ENCODE measurements at regions of chr14 and their contacts with region 1.

Region 1: GRCh38 chr14:101964297-101965144 is at the start of gene DYNC1H1:
- H3K4me3 Mint-ChIP-seq: peak within 1 kb of the TSS; percentile 93
- H3K27ac Mint-ChIP-seq: peak within 1 kb of the TSS; percentile 94
- H3K4me1 Mint-ChIP-seq: peaks cover 46% of the 10 kb centered on the region
- H3K27me3 Mint-ChIP-seq: peaks cover 4% of the 10 kb centered on the region

Region 2: DNA sequence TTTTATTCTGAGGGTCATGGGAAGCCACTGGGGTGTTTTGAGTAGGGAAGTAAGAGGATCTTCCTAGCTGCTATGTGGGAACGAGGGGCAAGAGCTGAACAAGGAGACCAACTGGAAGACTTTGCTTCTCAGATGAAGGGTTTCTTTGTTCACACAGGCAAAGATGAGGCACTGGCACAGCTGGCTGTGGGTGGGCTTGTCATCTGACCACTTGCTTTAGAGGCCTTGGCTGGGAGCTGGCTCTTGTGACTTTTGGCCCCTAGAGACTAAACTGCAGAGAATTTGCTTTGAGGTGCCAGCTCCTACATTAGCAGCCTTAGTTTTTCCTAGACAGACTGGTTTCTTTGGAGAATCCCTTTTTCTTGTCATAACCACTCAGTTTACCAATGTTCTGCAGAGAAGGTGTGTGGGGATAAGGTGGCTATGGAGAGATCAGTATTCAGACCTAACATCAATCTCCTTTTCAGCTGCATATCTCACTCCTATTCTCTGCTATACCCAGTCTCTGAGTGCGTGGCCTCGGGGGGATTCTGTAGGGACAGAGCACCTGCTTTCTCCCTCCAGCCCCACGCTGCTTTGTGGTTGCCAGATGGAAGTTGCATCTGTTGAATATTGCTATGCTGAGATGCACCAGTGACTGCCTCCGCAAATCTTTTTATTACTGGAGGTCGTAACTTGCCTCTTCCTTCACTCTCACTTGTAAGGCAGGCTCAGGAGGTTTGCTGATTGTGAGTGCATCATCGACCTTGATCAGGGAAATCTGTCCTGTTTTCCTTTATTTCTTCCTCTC is 190.3 kb before region 1 on chr14:
- intact Hi-C with region 1: loop called (anchors 10 kb)
- H3K4me3 Mint-ChIP-seq: no peak overlapping the region
- H3K27ac Mint-ChIP-seq: no peak overlapping the region
- H3K4me1 Mint-ChIP-seq: peaks cover 11% of the 10 kb centered on the region
- H3K27me3 Mint-ChIP-seq: peaks cover 20% of the 10 kb centered on the region

Region 3: GRCh38 chr14:101947906-101948665 is 16.4 kb before region 1 on chr14:
- intact Hi-C with region 1: loop called (anchors 2 kb)
- H3K4me3 Mint-ChIP-seq: peak overlapping the region; percentile 94
- H3K27ac Mint-ChIP-seq: peak overlapping the region; percentile 100
- H3K4me1 Mint-ChIP-seq: peaks cover 26% of the 10 kb centered on the region
- H3K27me3 Mint-ChIP-seq: peaks cover 39% of the 10 kb centered on the region

Region 4: DNA sequence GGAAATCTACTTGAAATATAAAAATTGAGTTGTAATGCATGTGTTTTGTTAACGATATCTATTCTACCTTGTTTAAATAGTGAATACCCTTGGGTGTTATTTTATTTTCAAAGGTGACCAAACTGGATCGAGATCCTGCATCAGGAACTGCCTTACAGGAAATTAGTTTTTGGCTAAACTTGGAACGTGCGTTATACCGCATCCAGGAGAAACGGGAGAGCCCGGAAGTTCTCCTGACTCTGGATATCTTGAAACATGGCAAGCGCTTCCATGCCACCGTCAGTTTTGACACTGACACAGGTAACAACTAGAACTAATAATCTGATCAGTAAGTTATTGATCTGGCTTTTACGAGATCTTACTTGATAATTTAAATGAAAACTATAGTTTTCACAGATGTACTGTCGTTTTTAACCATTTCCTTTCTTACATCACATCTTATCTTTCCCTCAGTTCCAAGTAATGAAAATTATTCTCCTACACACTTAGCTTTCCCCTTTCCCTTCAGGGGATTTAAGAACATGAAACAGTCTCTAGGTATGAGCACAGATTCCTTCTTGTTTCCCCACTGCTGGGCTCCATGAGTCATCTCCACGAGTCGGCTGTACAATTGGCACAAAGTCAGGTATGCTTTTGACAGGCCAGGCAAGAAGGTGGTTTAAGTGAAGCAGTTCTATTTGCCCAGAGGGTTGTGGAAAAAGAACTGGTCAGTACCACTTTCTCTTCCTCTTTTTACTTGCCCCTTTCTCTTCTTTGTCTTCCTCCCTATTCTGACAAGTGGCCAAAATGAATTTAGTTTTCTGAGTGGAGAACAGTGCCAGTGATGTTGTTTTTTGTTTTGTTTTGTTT is 16.0 kb after region 1 on chr14:
- intact Hi-C with region 1: no loop called
- H3K4me3 Mint-ChIP-seq: no peak overlapping the region
- H3K27ac Mint-ChIP-seq: peak overlapping the region; percentile 60
- H3K4me1 Mint-ChIP-seq: peaks cover 18% of the 10 kb centered on the region
- H3K27me3 Mint-ChIP-seq: no peaks in the 10 kb centered on the region

Region 5: DNA sequence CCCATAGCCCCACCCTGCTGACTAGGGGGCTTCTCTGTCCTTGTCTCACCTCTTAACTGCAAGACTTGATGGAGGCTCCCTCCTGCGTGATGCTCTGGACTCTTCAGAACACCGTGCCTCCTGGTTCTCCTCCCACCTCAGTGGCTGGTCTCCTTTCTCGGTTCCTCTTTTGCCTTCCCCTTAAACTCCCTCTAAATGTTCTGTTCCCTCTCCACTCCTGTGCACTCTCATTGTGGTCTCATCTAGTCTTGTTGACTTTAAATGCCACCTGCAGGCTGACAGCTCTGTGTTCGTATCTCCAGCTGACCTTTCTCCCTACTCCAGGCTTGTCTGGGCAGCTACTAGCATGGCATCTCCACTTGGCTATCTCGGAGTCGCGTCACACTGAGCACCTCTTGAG is 28.2 kb after region 1 on chr14:
- intact Hi-C with region 1: loop called (anchors 2 kb)
- H3K4me3 Mint-ChIP-seq: no peak overlapping the region
- H3K27ac Mint-ChIP-seq: peak overlapping the region; percentile 55
- H3K4me1 Mint-ChIP-seq: peaks cover 23% of the 10 kb centered on the region
- H3K27me3 Mint-ChIP-seq: no peaks in the 10 kb centered on the region

Region 6: DNA sequence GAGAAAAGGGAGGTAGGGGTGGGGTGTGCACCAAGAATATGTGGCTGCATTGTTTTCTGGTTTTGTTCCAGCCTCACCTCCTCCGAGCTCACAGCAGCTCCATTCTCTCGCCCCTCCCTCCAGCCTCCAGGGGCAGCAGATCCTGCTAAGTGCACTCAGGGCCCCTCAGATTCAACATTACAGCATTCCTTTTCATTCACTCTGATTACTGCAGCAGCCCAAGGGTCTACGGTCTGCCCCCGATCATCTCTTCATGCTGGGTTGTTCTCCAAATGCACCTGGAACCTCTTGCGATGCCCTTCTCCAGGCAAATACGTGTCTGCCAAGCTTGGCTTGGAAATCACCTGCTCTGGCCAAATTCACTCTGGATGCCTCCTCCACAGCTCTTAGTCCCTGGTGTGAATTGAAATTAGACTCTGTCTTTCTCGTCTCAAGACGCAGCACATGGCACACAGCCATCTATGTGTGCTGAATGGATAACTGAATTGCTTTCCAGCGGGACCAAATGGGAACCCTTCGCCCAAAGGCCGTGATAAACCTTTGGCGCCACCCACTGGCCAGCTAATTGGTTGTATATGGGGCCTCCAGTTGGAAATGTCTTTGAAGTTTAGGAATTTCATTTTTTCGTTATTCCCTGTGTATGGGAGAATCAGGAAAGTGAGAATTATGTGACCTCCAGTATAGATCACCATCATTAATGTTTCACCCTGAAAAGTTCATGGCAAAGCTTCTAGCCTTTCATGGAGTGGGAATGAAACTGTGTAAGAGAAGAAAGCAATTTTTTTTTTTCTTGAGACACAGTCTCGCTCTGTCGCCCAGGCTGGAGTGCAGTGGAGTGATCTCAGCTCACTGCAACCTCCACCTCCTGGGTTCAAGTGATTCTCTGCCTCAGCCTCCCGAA is 131.9 kb after region 1 on chr14:
- intact Hi-C with region 1: loop called (anchors 5 kb)
- H3K4me3 Mint-ChIP-seq: no peak overlapping the region
- H3K27ac Mint-ChIP-seq: no peak overlapping the region
- H3K4me1 Mint-ChIP-seq: peaks cover 24% of the 10 kb centered on the region
- H3K27me3 Mint-ChIP-seq: peaks cover 22% of the 10 kb centered on the region

Region 7: DNA sequence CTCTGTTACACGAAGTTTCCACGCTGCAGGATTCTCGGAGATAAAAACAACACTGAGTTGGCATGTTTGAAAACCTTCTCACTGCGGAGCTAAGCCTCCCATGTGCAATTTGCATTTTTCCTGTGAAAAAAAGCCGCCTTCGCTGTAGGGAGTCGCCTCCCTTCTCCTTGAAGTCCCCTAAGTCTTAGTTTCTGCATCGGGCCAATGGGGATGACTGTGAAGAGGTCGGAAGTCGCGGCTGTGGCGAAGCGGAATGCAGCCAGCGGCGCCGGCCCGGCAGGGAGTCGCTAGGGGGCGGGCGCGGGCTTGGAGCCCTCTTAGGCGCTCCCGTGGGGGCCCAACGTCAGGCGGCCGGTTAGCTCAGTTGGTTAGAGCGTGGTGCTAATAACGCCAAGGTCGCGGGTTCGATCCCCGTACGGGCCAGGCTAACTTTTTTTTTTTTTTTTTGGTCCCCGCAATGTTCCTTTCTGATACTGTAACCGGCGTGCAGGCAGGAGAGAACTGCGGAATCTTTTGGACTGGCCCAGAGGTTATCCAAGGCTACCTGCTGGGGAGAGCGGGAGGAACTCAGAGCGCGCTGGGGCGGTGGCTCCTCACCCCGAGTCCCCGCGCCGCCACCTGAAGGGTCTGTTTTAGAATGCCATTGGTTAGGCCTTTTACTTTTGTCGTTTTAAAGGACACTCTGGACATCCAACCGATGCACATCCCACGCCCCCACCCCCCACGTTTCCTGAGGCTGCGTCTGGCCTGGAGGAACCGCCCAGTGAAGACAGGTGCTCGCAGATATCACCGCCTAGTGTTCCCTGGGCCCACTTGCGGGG is 352.4 kb after region 1 on chr14:
- intact Hi-C with region 1: loop called (anchors 10 kb)
- H3K4me3 Mint-ChIP-seq: peak overlapping the region; percentile 80
- H3K27ac Mint-ChIP-seq: peak overlapping the region; percentile 79
- H3K4me1 Mint-ChIP-seq: peaks cover 41% of the 10 kb centered on the region
- H3K27me3 Mint-ChIP-seq: peaks cover 12% of the 10 kb centered on the region